Ovary (tissue), 10 donors: ENCODE measurements at regions of chr9 and their contacts with region 1.

Region 1: GRCh38 chr9:113807173-113808061 is 68.7 kb upstream of the ZNF618 start:
- DNase-seq: peak; percentile 37 to 67 (median 54)
- H3K4me3 ChIP-seq: no peak overlapping the region
- H3K27ac ChIP-seq: no peak overlapping the region
- H3K4me1 ChIP-seq: peaks cover 4% of the 10 kb centered on the region
- H3K27me3 ChIP-seq: no peaks in the 10 kb centered on the region
- CTCF ChIP-seq: peak; percentile 67 to 86 (median 80)
- EP300 ChIP-seq: no peak
- POLR2A ChIP-seq: no peak

Region 2: GRCh38 chr9:113454914-113455761 is 352.3 kb before region 1 on chr9:
- intact Hi-C with region 1: no loop called
- DNase-seq: peak; percentile 46 to 69 (median 65)
- H3K4me3 ChIP-seq: no peak overlapping the region
- H3K27ac ChIP-seq: peak overlapping the region; percentile 26 to 90
- H3K4me1 ChIP-seq: peaks cover 13% of the 10 kb centered on the region
- H3K27me3 ChIP-seq: no peaks in the 10 kb centered on the region
- CTCF ChIP-seq: no peak
- EP300 ChIP-seq: no peak
- POLR2A ChIP-seq: no peak

Region 3: GRCh38 chr9:113876151-113876992 is 69.0 kb after region 1 on chr9 and contains the start of gene ZNF618:
- intact Hi-C with region 1: loop called (anchors 5 to 10 kb)
- DNase-seq: peak in 4 of 5 donors; percentile 23 to 64 (median 58)
- H3K4me3 ChIP-seq: peak within 1 kb of the TSS; percentile 96
- H3K27ac ChIP-seq: peak within 1 kb of the TSS; percentile 69 to 90
- H3K4me1 ChIP-seq: peaks cover 10% of the 10 kb centered on the region
- H3K27me3 ChIP-seq: no peaks in the 10 kb centered on the region
- CTCF ChIP-seq: peak in 2 of 3 donors; percentile 12 to 21
- EP300 ChIP-seq: no peak
- POLR2A ChIP-seq: no peak
- total RNA-seq, gene ZNF618: 8.2 to 28.9 (median 22.0) TPM